WTC11 (cell line): ENCODE measurements at regions of chr2 and their contacts with region 1.

Region 1: DNA sequence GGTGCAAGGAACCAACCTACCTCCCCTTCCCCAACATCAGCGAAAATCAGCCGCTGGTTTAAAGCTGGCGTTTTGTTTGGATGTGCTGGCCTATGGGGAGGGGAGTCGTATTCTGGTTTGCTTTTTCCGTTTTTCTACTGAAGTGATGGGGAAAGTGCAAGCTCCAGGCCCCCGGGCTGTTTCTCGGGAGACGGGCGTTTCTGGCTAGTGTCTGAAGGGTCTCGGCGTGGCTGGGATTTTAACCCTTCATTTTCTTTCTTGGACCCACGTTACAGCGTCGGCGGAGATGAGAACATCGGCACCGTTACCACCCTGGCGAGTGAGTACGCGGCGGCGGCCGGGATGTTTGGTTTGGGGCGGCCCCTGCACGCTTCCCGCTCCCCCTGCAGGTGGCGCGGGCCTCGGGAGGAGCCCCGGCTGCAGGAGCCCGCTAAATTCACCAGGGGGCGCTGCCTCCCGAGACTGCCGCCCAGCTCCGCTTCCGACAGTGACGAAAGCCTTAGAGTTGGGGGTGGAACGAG is 70.7 kb downstream of the PLB1 start:
- DNase-seq: peak; percentile 90
- ATAC-seq: peak; percentile 97
- H3K4me3 Mint-ChIP-seq: peak overlapping the region; percentile 86
- H3K27ac Mint-ChIP-seq: no peak overlapping the region
- H3K4me1 Mint-ChIP-seq: peaks cover 14% of the 10 kb centered on the region
- H3K27me3 Mint-ChIP-seq: peaks cover 12% of the 10 kb centered on the region
- CTCF ChIP-seq: peak; percentile 98

Region 2: DNA sequence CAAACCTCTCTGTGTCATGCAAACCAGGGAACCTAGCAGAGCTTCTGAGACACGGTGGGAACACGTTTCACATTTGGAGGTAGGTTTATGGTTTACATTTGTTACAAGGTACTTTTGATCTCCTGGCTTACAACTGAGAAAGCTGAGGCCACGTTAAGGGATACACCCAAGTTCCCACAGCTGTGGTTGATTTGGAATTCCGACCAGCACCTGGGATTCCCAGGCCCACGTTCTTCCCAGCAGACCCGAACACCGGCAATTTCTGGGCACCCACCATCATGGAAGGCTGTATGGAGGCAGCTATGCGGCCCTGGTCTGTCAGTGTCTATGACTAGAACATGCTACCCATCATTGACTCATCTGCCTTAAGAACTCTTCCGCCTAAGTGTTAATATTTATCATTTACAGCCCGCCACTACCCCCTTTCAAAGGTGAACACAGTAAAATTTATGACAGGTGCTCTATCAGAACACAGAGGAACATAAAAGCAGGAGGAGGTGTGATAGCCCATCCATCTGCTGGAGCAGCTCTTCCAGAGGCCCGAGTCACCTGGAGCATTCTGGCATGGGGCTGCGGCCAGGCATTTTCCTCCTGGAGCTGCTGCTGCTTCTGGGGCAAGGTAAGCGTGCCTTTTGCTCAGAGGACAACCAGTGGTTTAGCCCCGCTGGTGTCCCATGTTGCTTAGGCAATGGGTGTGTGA is 70.9 kb before region 1 on chr2 and contains the start of gene PLB1:
- CTCF ChIA-PET with region 1: no interaction called
- POLR2A ChIA-PET with region 1: no interaction called
- DNase-seq: no peak
- ATAC-seq: no peak
- H3K4me3 Mint-ChIP-seq: no peak within 1 kb of the TSS
- H3K27ac Mint-ChIP-seq: no peak within 1 kb of the TSS
- H3K4me1 Mint-ChIP-seq: no peaks in the 10 kb centered on the region
- H3K27me3 Mint-ChIP-seq: no peaks in the 10 kb centered on the region; the same call in 1 of the 2 replicates
- CTCF ChIP-seq: no peak
- total RNA-seq, gene PLB1: 0.27 to 0.44 TPM (median 0.39 TPM) in 3 replicates

Region 3: GRCh38 chr2:28594289-28595108 is 27.9 kb after region 1 on chr2:
- CTCF ChIA-PET with region 1: interaction called, 50 read pairs
- POLR2A ChIA-PET with region 1: no interaction called
- DNase-seq: peak; percentile 92
- ATAC-seq: peak; percentile 88
- H3K4me3 Mint-ChIP-seq: no peak overlapping the region
- H3K27ac Mint-ChIP-seq: no peak overlapping the region
- H3K4me1 Mint-ChIP-seq: peaks cover 33% of the 10 kb centered on the region
- H3K27me3 Mint-ChIP-seq: no peaks in the 10 kb centered on the region; the same call in 1 of the 2 replicates
- CTCF ChIP-seq: peak; percentile 77

Region 4: GRCh38 chr2:28751252-28751955 is 184.8 kb after region 1 on chr2 and contains the start of gene PPP1CB:
- CTCF ChIA-PET with region 1: interaction called, 13 read pairs
- POLR2A ChIA-PET with region 1: no interaction called
- DNase-seq: peak; percentile 86
- ATAC-seq: peak; percentile 90
- H3K4me3 Mint-ChIP-seq: peak within 1 kb of the TSS; percentile 97
- H3K27ac Mint-ChIP-seq: peak within 1 kb of the TSS; percentile 97
- H3K4me1 Mint-ChIP-seq: peaks cover 33% of the 10 kb centered on the region
- H3K27me3 Mint-ChIP-seq: no peaks in the 10 kb centered on the region
- CTCF ChIP-seq: no peak
- total RNA-seq, gene PPP1CB: 122 to 133 TPM (median 124 TPM) in 3 replicates

Region 5: GRCh38 chr2:28810384-28811285 is 244.1 kb after region 1 on chr2 and contains the start of gene SPDYA:
- CTCF ChIA-PET with region 1: interaction called, 10 read pairs
- POLR2A ChIA-PET with region 1: no interaction called
- DNase-seq: peak; percentile 88
- ATAC-seq: peak; percentile 97
- H3K4me3 Mint-ChIP-seq: peak within 1 kb of the TSS; percentile 57
- H3K27ac Mint-ChIP-seq: no peak within 1 kb of the TSS
- H3K4me1 Mint-ChIP-seq: peaks cover 2% of the 10 kb centered on the region; the same call in 1 of the 2 replicates
- H3K27me3 Mint-ChIP-seq: peaks cover 45% of the 10 kb centered on the region
- CTCF ChIP-seq: no peak
- total RNA-seq, gene SPDYA: 0.30 to 0.61 TPM (median 0.46 TPM) in 3 replicates